Caco-2 (cell line): ENCODE measurements at regions of chr5 and their contacts with region 1.

Region 1: GRCh38 chr5:123671042-123671441 is 159.1 kb downstream of the CSNK1G3 start:
- DNase-seq: peak; percentile 38 to 57
- H3K4me3 ChIP-seq: no peak overlapping the region
- H3K4me3 Mint-ChIP-seq: no peak overlapping the region
- H3K27ac Mint-ChIP-seq: no peak overlapping the region
- H3K4me1 ChIP-seq: no peaks in the 10 kb centered on the region; the same call in 1 of the 2 replicates
- H3K4me1 Mint-ChIP-seq: no peaks in the 10 kb centered on the region
- H3K27me3 ChIP-seq: no peaks in the 10 kb centered on the region
- H3K27me3 Mint-ChIP-seq: no peaks in the 10 kb centered on the region
- CTCF ChIP-seq: peak; percentile 60 to 78

Region 2: GRCh38 chr5:123855608-123856007 is 184.6 kb after region 1 on chr5:
- CTCF ChIA-PET with region 1: no interaction called
- POLR2A ChIA-PET with region 1: no interaction called
- intact Hi-C with region 1: loop called (anchors 5 kb)
- DNase-seq: no peak
- H3K4me3 ChIP-seq: no peak overlapping the region
- H3K4me3 Mint-ChIP-seq: no peak overlapping the region
- H3K27ac Mint-ChIP-seq: no peak overlapping the region
- H3K4me1 ChIP-seq: no peaks in the 10 kb centered on the region
- H3K4me1 Mint-ChIP-seq: no peaks in the 10 kb centered on the region
- H3K27me3 ChIP-seq: no peaks in the 10 kb centered on the region
- H3K27me3 Mint-ChIP-seq: no peaks in the 10 kb centered on the region
- CTCF ChIP-seq: no peak

Region 3: GRCh38 chr5:124043456-124043855 is 372.4 kb after region 1 on chr5:
- CTCF ChIA-PET with region 1: no interaction called
- POLR2A ChIA-PET with region 1: no interaction called
- intact Hi-C with region 1: loop called (anchors 1 kb)
- DNase-seq: peak; percentile 70 to 73
- H3K4me3 ChIP-seq: no peak overlapping the region
- H3K4me3 Mint-ChIP-seq: no peak overlapping the region
- H3K27ac Mint-ChIP-seq: no peak overlapping the region
- H3K4me1 ChIP-seq: no peaks in the 10 kb centered on the region
- H3K4me1 Mint-ChIP-seq: no peaks in the 10 kb centered on the region
- H3K27me3 ChIP-seq: no peaks in the 10 kb centered on the region
- H3K27me3 Mint-ChIP-seq: no peaks in the 10 kb centered on the region
- CTCF ChIP-seq: peak; percentile 45 to 85

Region 4: GRCh38 chr5:124655922-124656511 is 985.0 kb after region 1 on chr5:
- CTCF ChIA-PET with region 1: no interaction called
- POLR2A ChIA-PET with region 1: no interaction called
- intact Hi-C with region 1: loop called (anchors 1 kb)
- DNase-seq: peak; percentile 80 to 87
- H3K4me3 ChIP-seq: no peak overlapping the region
- H3K4me3 Mint-ChIP-seq: no peak overlapping the region
- H3K27ac Mint-ChIP-seq: no peak overlapping the region
- H3K4me1 ChIP-seq: peaks cover 72% of the 10 kb centered on the region
- H3K4me1 Mint-ChIP-seq: peaks cover 9% of the 10 kb centered on the region
- H3K27me3 ChIP-seq: no peaks in the 10 kb centered on the region
- H3K27me3 Mint-ChIP-seq: no peaks in the 10 kb centered on the region
- CTCF ChIP-seq: no peak